ENCODE measurements at regions of chr10 and their contacts with region 1.

Region 1: GRCh38 chr10:95459446-95460045 is 101.6 kb downstream of the SORBS1 start:
- DNase-seq: no peak
- H3K4me3 ChIP-seq: no peak overlapping the region
- H3K27ac ChIP-seq: no peak overlapping the region
- H3K4me1 ChIP-seq: no peaks in the 10 kb centered on the region; a peak in 1 of 4 replicates
- H3K27me3 ChIP-seq: 0 out of 2 replicates have a peak, but pooled peaks cover 4% of the 10 kb centered on the region
- CTCF ChIP-seq: no peak
- EP300 ChIP-seq: no peak
- RAD21 ChIP-seq: no peak

Region 2: DNA sequence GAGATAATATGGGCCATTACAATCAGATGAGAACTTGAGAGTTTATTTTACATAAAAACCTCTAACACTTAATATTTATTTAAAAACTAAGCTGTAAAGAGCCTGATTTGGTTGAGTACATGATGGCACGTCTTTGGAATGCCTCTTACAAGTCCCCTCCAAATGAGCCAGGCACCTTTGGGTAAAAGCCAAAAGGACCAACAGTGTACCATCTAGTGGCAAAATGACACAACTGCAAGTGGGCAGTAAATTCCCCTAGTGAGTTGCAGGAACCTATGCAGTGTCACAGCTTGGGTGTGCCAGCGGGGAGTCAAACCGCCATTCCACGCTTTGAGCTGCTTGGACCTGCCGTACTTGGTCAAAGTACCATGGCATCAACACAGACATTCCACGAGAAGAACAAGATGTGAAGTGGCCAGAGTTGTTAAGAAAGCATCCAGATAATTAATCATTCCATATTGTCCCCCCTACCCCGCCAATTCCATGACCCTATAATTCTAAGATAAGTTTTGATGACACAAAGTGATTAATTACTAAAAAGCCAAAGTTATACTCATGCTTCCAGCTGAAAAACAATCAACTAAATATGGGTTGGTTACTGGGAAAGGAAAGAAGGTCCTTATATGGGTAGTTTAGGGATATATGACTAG is 13.6 kb before region 1 on chr10:
- CTCF ChIA-PET with region 1: interaction called, 11 read pairs
- POLR2A ChIA-PET with region 1: no interaction called
- DNase-seq: peak; percentile 67
- H3K4me3 ChIP-seq: no peak overlapping the region
- H3K27ac ChIP-seq: 0 out of 4 replicates have a peak overlapping the region, but pooled peaks of 1 of the 2 experiments have one; percentile 16
- H3K4me1 ChIP-seq: peaks cover 4% of the 10 kb centered on the region in 2 experiments; a peak in 2 of 4 replicates
- H3K27me3 ChIP-seq: no peaks in the 10 kb centered on the region
- CTCF ChIP-seq: peak; percentile 81
- EP300 ChIP-seq: no peak
- RAD21 ChIP-seq: peak; percentile 64

Region 3: GRCh38 chr10:95485445-95485844 is 25.9 kb after region 1 on chr10:
- CTCF ChIA-PET with region 1: no interaction called
- POLR2A ChIA-PET with region 1: no interaction called
- DNase-seq: no peak
- H3K4me3 ChIP-seq: no peak overlapping the region
- H3K27ac ChIP-seq: no peak overlapping the region
- H3K4me1 ChIP-seq: no peaks in the 10 kb centered on the region
- H3K27me3 ChIP-seq: no peaks in the 10 kb centered on the region
- CTCF ChIP-seq: no peak
- EP300 ChIP-seq: no peak
- RAD21 ChIP-seq: no peak

Measured in SK-N-SH (cell line).